ENCODE measurements at regions of chr20 and their contacts with region 1.

Region 1: GRCh38 chr20:5788385-5788895 is 38.2 kb downstream of the SHLD1 start:
- ATAC-seq: peak; percentile 73 to 96 (median 86)
- H3K4me3 ChIP-seq: no peak overlapping the region
- H3K27ac ChIP-seq: no peak overlapping the region
- H3K4me1 ChIP-seq: no peaks in the 10 kb centered on the region

Region 2: DNA sequence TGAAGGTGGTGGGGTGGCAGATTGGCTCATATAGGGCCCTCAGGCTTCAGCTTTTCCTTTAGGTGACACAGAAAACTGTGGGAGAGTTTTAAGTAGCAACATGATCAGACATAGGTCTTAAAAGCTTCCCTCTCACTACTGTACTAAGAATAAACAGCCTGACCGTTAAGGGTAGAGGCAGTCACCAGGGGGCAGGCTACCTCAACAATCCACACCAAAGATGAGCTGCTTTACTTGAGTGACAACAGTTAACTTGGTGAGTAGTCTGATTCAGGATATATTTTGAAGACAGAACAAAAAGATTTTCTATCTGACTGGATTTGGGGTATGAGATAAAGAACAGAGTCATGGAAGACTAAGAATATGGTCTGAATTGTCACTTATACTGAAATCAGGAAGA is 231.3 kb before region 1 on chr20:
- in situ Hi-C with region 1: loop called in 4 of 9 experiments (anchors 25 kb)
- ATAC-seq: peak in 4 of 8 experiments; percentile 39 to 76 (median 70)
- H3K4me3 ChIP-seq: no peak overlapping the region
- H3K27ac ChIP-seq: no peak overlapping the region
- H3K4me1 ChIP-seq: no peaks in the 10 kb centered on the region

Measured in motor neuron (in vitro differentiated cells).